ENCODE measurements at regions of chr7 and their contacts with region 1.

Region 1: GRCh38 chr7:143408686-143409561 is at the start of gene EPHA1:
- DNase-seq: peak in 1 of 3 donors; percentile 45
- ATAC-seq: peak in 1 of 2 donors; percentile 38
- H3K4me3 ChIP-seq: peak within 1 kb of the TSS; percentile 21
- H3K27ac ChIP-seq: no peak within 1 kb of the TSS
- H3K4me1 ChIP-seq: peaks cover 2% of the 10 kb centered on the region
- H3K27me3 ChIP-seq: no peaks in the 10 kb centered on the region
- total RNA-seq, gene EPHA1: 0.46 to 0.56 TPM in 2 of 4 donors, not detected in the others

Region 2: GRCh38 chr7:143380255-143380645 is 28.7 kb before region 1 on chr7:
- intact Hi-C with region 1: loop called in 1 of 4 experiments (anchors 5 kb)
- DNase-seq: peak; percentile 86 to 96 (median 95)
- ATAC-seq: peak; percentile 80
- H3K4me3 ChIP-seq: peak overlapping the region; percentile 60
- H3K27ac ChIP-seq: peak overlapping the region; percentile 83
- H3K4me1 ChIP-seq: peaks cover 18% of the 10 kb centered on the region
- H3K27me3 ChIP-seq: no peaks in the 10 kb centered on the region